ENCODE measurements at regions of chr17 and their contacts with region 1.

Region 1: DNA sequence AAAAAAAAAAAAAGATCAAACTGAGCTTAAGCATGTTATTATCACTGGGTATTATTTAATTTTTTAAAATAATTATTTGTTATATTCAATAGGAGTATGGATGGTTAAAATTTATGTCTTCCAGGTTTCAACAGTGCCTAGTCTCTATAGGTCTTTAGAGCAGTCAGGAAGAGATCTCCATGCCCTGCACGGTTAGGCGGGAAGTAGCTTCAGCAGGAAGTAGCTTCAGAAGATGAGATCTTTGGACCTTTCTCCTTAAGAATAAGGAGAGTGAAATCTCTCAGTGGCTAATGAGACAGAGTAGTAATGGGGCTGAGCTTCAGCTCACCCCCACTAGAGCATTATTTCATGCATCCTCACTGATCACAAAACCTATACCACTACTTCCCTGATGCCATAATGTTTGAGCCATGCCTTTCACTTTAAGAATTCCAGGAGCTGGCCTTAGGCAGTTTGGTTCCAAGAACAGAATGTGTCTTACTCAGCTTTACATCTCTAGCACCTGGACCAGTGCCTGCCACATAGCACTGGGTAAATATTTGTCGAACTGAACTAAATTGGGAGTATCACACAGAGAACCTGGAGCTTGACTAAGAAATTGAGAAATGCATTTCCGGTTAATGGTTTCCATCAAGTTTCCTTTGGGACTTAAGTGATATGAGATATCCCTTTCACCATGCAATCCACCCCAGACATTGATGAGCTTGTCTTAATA is 43.5 kb downstream of the SCPEP1 start:
- DNase-seq: no peak
- ATAC-seq: no peak
- H3K4me3 Mint-ChIP-seq: no peak overlapping the region
- H3K27ac Mint-ChIP-seq: no peak overlapping the region
- H3K4me1 Mint-ChIP-seq: peaks cover 4% of the 10 kb centered on the region
- H3K27me3 Mint-ChIP-seq: peaks cover 19% of the 10 kb centered on the region
- CTCF ChIP-seq: no peak

Region 2: GRCh38 chr17:57009737-57010445 is 11.5 kb before region 1 on chr17:
- CTCF ChIA-PET with region 1: interaction called, 10 read pairs
- POLR2A ChIA-PET with region 1: no interaction called
- intact Hi-C with region 1: no loop called
- DNase-seq: peak; percentile 77
- ATAC-seq: peak; percentile 97
- H3K4me3 Mint-ChIP-seq: peak overlapping the region; percentile 3
- H3K27ac Mint-ChIP-seq: no peak overlapping the region
- H3K4me1 Mint-ChIP-seq: peaks cover 8% of the 10 kb centered on the region
- H3K27me3 Mint-ChIP-seq: peaks cover 6% of the 10 kb centered on the region
- CTCF ChIP-seq: peak; percentile 76

Measured in activated CD8-positive, alpha-beta T cell treated with anti-CD3 and anti-CD28 coated beads for 36 hours (primary cell).